Activated B cell treated with CpG ODN at 0.5 μM for 24 hours (primary cell): ENCODE measurements at regions of chr5 and their contacts with region 1.

Region 1: DNA sequence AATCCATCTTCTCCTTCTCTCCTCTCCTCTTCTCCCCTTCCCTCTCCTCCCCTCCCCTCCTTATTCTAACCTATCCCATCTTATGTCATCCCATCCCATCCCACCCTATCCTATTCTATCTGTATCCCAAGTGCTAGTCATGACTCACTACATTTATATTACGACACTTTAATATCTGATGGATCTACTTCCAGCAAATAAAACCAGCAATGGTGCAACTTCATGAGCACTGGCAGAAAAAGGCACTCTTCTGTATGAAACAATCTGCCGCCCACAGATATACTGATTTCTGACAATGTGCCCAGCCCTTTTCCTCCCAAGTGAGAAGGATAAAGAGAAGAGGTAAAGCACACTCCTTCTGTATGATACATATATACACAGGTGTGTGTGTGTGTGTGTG is 86.6 kb upstream of the ANKH start:
- DNase-seq: no peak
- ATAC-seq: no peak
- H3K4me3 Mint-ChIP-seq: no peak overlapping the region
- H3K27ac Mint-ChIP-seq: no peak overlapping the region
- H3K4me1 Mint-ChIP-seq: peaks cover 4% of the 10 kb centered on the region
- H3K27me3 Mint-ChIP-seq: peaks cover 6% of the 10 kb centered on the region
- CTCF ChIP-seq: no peak

Region 2: DNA sequence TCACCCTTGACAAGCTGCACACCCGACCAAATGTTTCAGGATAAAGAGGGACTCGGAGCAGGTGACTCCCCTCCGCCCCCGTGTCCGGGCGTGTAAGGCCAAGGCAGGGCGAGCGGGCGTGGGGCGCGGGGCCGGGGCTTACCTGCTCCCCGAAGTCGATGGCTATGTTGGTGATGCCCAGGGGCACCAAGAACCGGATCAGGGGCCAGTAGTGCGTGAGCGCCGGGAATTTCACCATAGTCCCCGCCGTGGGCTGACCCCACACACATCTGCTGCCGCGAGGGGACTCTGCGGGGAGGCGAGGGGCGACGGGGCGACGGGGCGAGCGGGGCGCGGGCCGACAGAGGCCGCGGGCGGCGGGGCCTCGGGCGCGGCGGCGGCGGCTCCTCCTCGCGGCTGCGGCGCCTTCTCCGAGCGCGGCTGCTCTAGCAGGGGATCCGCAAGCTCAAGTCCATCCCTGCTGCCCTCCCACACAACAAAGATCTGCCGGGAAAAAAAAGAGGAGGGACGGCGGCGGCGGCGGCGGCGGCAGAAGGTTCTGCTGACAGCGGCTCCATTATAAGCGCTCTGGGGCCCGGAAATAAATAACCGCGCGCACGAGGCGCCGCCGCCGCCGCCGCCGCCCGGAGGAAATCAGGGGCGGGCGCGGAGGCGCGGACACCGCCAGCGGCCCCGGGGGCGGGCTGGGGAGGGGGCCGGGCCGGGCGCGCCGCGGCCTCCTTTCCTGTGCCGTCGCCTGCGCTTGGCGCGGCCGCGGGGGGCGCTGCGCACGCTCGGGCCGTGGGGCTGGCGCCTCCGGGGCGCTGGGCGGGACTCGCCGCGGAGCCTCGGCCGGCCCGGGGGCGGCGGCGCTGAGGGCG is 86.8 kb before region 1 on chr5 and contains the start of gene ANKH:
- CTCF ChIA-PET with region 1: no interaction called
- POLR2A ChIA-PET with region 1: interaction called, 3 read pairs
- intact Hi-C with region 1: loop called (anchors 5 kb)
- DNase-seq: peak; percentile 86
- ATAC-seq: peak; percentile 88
- H3K4me3 Mint-ChIP-seq: peak within 1 kb of the TSS; percentile 87
- H3K27ac Mint-ChIP-seq: peak within 1 kb of the TSS; percentile 80
- H3K4me1 Mint-ChIP-seq: peaks cover 22% of the 10 kb centered on the region
- H3K27me3 Mint-ChIP-seq: no peaks in the 10 kb centered on the region
- CTCF ChIP-seq: no peak
- total RNA-seq, gene ANKH: 43.3 and 43.7 TPM in 2 replicates